Left ventricle myocardium inferior (tissue), 1 donor: ENCODE measurements at regions of chr13 and their contacts with region 1.

Region 1: DNA sequence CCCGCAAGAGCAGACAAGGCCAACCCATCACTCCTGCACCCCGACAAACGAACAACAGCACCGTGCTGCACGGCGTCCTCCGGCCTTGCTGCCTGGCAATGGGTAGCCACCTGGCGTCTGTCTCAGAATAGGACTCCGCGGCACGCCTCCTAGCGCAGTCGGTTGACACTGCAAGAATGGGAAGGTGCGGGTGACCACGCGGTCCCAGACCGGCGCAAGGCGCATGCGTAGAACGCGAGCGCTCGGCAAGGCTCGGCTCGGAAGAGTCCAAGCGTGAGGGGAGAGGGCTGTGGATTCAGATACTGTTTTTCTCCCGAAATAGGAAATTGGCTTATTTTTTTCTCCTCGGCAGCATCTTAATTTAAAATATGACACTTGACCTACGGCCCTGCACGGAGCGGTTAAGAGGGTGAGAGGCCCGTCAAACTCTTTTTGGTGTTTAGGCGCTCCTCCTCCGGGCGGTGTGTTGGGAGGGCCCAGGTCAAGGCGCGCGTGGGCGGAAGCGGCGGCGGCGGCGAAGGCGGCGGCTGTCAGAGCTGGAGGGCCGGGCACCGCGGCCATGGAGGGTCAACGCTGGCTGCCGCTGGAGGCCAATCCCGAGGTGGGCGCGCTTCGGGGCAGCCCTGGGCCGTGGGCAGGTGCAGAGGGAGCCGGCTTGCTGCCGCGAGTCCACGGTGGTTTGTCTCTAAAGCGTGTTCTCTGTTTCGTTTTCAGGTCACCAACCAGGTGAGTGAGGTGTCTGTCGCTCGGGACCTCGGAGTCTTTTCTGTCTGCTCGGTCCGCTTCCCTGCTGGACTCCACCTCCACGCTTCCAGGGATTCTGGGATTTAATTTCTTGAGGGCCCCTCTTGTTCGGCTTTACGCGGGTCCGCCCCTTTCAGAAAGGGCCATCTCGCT is at the start of gene UCHL3:
- DNase-seq: peak; percentile 96
- H3K4me3 ChIP-seq: peak within 1 kb of the TSS; percentile 93
- H3K27ac ChIP-seq: peak within 1 kb of the TSS; percentile 90
- H3K4me1 ChIP-seq: peaks cover 20% of the 10 kb centered on the region
- H3K27me3 ChIP-seq: no peaks in the 10 kb centered on the region
- CTCF ChIP-seq: peak; percentile 92
- total RNA-seq, gene UCHL3: 23.2 TPM

Region 2: GRCh38 chr13:75299913-75300862 is 249.3 kb before region 1 on chr13:
- intact Hi-C with region 1: loop called (anchors 10 kb)
- DNase-seq: no peak
- H3K4me3 ChIP-seq: no peak overlapping the region
- H3K27ac ChIP-seq: no peak overlapping the region
- H3K4me1 ChIP-seq: peaks cover 22% of the 10 kb centered on the region
- H3K27me3 ChIP-seq: no peaks in the 10 kb centered on the region
- CTCF ChIP-seq: no peak

Region 3: GRCh38 chr13:75402787-75403186 is 146.7 kb before region 1 on chr13:
- intact Hi-C with region 1: no loop called
- DNase-seq: peak; percentile 68
- H3K4me3 ChIP-seq: peak overlapping the region; percentile 26
- H3K27ac ChIP-seq: peak overlapping the region; percentile 79
- H3K4me1 ChIP-seq: peaks cover 68% of the 10 kb centered on the region
- H3K27me3 ChIP-seq: no peaks in the 10 kb centered on the region
- CTCF ChIP-seq: no peak

Region 4: DNA sequence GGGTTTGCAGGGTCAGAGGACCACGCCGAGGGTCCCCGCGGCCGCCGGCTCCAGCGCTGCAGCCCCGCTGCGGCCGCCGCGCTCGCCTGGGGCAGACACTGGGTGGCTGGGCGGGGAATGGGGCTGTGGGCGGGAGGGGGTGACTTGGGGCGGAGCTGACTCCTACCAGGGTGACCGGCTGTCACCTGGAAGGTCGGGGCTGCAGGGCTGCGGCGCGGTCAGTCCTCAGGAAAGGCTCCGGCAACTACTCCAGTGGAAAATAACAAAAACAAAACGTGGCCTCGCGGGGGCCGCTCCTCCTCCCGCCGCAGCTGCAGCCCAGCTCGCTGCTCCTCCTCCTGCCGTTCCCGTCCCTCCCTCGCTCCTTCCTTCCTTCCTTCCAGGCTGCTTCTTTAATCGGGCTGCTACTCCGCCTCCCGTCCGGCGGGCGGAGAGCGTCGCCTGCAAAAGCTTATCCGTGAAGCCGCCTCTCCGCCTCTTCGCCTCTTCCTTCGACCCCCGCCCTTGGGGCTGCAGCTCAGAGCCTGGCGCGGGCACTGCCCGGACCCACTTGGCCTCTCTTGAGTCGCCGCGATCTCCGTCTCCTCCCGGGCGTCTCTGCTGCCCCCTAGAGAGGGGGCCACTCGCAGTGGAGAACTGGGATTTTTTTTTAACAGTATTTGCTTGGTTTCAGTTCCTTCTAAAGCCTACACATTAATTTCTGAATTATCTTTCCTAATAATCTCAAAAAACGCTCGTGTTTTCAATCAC is 67.3 kb before region 1 on chr13 and contains the start of gene TBC1D4:
- intact Hi-C with region 1: loop called (anchors 5 kb)
- DNase-seq: peak; percentile 84
- H3K4me3 ChIP-seq: peak within 1 kb of the TSS; percentile 95
- H3K27ac ChIP-seq: peak within 1 kb of the TSS; percentile 95
- H3K4me1 ChIP-seq: peaks cover 56% of the 10 kb centered on the region
- H3K27me3 ChIP-seq: no peaks in the 10 kb centered on the region
- CTCF ChIP-seq: peak; percentile 83
- total RNA-seq, gene TBC1D4: 97.5 TPM

Region 5: GRCh38 chr13:75607451-75607850 is 57.9 kb after region 1 on chr13:
- intact Hi-C with region 1: no loop called
- DNase-seq: no peak
- H3K4me3 ChIP-seq: no peak overlapping the region
- H3K27ac ChIP-seq: no peak overlapping the region
- H3K4me1 ChIP-seq: no peaks in the 10 kb centered on the region
- H3K27me3 ChIP-seq: no peaks in the 10 kb centered on the region
- CTCF ChIP-seq: no peak